Activated CD4-positive, alpha-beta T cell treated with anti-CD3 and anti-CD28 coated beads for 36 hours (primary cell): ENCODE measurements at regions of chr9 and their contacts with region 1.

Region 1: GRCh38 chr9:126471084-126471624 is 142.6 kb upstream of the LMX1B start:
- DNase-seq: peak; percentile 89
- ATAC-seq: peak; percentile 92
- H3K4me3 Mint-ChIP-seq: peak overlapping the region; percentile 39
- H3K27ac Mint-ChIP-seq: no peak overlapping the region
- H3K4me1 Mint-ChIP-seq: peaks cover 60% of the 10 kb centered on the region
- H3K27me3 Mint-ChIP-seq: peaks cover 6% of the 10 kb centered on the region

Region 2: DNA sequence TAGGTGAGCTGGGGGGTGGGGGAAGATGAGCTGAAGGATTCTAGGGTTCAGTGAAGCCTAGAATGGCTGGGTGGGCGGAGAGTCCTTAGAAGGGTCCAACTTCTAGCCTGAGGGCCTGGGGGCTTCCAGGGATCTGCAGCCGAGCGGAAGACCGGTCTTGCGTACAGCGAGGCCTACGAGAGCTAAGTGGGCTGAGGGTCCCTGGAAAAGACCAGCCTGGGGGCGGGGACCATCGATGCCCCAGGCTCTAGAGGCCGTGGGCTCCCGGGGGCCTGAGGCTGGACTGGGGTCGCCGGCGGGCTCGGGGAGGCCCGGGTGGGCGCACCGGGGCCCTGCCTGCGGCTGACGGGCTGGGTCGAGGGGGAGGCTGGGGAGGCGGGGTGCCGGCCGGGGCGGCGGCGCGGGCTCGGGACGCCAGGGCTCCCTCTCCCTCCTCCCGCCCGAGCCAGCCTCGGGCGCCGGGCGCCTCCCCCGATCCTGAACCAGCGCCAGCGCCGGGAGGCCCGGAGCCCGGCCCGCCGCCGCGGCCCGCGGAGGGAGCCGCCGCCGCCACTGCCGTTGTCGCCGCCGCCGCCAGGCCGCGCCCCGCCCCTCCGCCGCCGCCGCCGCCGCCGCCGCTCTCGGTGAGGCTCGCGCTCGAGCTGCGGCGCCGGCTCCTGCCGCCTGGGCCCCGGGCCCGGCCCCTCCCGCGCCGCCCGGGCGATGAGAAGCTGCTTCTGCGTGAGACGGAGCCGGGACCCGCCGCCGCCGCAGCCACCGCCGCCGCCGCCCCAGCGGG is 144.7 kb before region 1 on chr9 and contains the start of gene MVB12B:
- CTCF ChIA-PET with region 1: interaction called, 3 read pairs
- POLR2A ChIA-PET with region 1: no interaction called
- intact Hi-C with region 1: loop called in 1 of 2 experiments (anchors 2 kb)
- DNase-seq: peak; percentile 68
- ATAC-seq: peak; percentile 75
- H3K4me3 Mint-ChIP-seq: peak within 1 kb of the TSS; percentile 63
- H3K27ac Mint-ChIP-seq: peak within 1 kb of the TSS; percentile 47
- H3K4me1 Mint-ChIP-seq: peaks cover 31% of the 10 kb centered on the region
- H3K27me3 Mint-ChIP-seq: peaks cover 2% of the 10 kb centered on the region
- total RNA-seq, gene MVB12B: 3.0 TPM

Region 3: GRCh38 chr9:126411225-126411947 is 59.8 kb before region 1 on chr9:
- CTCF ChIA-PET with region 1: interaction called, 4 read pairs
- POLR2A ChIA-PET with region 1: no interaction called
- intact Hi-C with region 1: loop called (anchors 1 kb)
- DNase-seq: peak; percentile 62
- ATAC-seq: peak; percentile 89
- H3K4me3 Mint-ChIP-seq: peak overlapping the region; percentile 54
- H3K27ac Mint-ChIP-seq: peak overlapping the region; percentile 72
- H3K4me1 Mint-ChIP-seq: peaks cover 35% of the 10 kb centered on the region
- H3K27me3 Mint-ChIP-seq: no peaks in the 10 kb centered on the region

Region 4: GRCh38 chr9:126500684-126501382 is 29.7 kb after region 1 on chr9:
- CTCF ChIA-PET with region 1: interaction called, 14 read pairs
- POLR2A ChIA-PET with region 1: no interaction called
- intact Hi-C with region 1: no loop called
- DNase-seq: peak; percentile 83
- ATAC-seq: peak; percentile 87
- H3K4me3 Mint-ChIP-seq: no peak overlapping the region
- H3K27ac Mint-ChIP-seq: no peak overlapping the region
- H3K4me1 Mint-ChIP-seq: peaks cover 5% of the 10 kb centered on the region
- H3K27me3 Mint-ChIP-seq: peaks cover 8% of the 10 kb centered on the region